ENCODE measurements at regions of chr1 and their contacts with region 1.

Region 1: DNA sequence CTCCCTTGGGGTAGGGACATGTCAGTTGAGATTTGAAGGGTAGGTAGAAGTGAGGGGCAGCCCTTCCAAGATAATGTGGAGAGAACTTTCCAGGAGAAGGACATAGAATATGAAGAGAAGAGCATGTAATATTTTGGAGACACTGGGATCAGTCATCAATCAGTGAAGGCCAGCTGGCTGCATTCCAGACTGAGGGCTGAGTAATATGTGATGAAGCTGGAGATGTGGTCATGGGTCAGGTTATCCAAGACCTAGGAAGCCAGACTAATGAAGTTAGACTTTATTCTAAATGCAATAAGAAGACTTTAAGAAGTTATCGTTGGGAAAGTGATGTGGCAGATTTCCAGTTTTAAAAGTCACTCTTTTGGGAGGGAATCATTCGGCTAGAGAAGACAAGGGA is 262.0 kb downstream of the HMCN1 start:
- DNase-seq: no peak
- ATAC-seq: no peak
- H3K4me3 ChIP-seq: no peak overlapping the region
- H3K27ac ChIP-seq: no peak overlapping the region
- H3K4me1 ChIP-seq: no peaks in the 10 kb centered on the region
- H3K27me3 ChIP-seq: no peaks in the 10 kb centered on the region
- CTCF ChIP-seq: no peak
- EP300 ChIP-seq: no peak
- POLR2A ChIP-seq: no peak
- RAD21 ChIP-seq: no peak

Region 2: GRCh38 chr1:185720633-185721272 is 275.5 kb before region 1 on chr1:
- CTCF ChIA-PET with region 1: no interaction called
- POLR2A ChIA-PET with region 1: no interaction called
- in situ Hi-C with region 1: no loop called
- intact Hi-C with region 1: loop called (anchors 10 kb)
- DNase-seq: peak in 1 of 4 experiments; percentile 33
- ATAC-seq: no peak
- H3K4me3 ChIP-seq: no peak overlapping the region
- H3K27ac ChIP-seq: no peak overlapping the region
- H3K4me1 ChIP-seq: no peaks in the 10 kb centered on the region
- H3K27me3 ChIP-seq: no peaks in the 10 kb centered on the region
- CTCF ChIP-seq: peak in 2 of 3 experiments; percentile 24 to 56; a peak in 4 of 6 replicates
- EP300 ChIP-seq: no peak
- POLR2A ChIP-seq: no peak
- RAD21 ChIP-seq: peak; percentile 68 to 71

Region 3: GRCh38 chr1:185813401-185813979 is 182.7 kb before region 1 on chr1:
- CTCF ChIA-PET with region 1: no interaction called
- POLR2A ChIA-PET with region 1: no interaction called
- in situ Hi-C with region 1: no loop called
- intact Hi-C with region 1: loop called (anchors 5 kb)
- DNase-seq: peak; percentile 13 to 69 (median 18)
- ATAC-seq: peak; percentile 91
- H3K4me3 ChIP-seq: no peak overlapping the region
- H3K27ac ChIP-seq: no peak overlapping the region
- H3K4me1 ChIP-seq: no peaks in the 10 kb centered on the region
- H3K27me3 ChIP-seq: no peaks in the 10 kb centered on the region
- CTCF ChIP-seq: peak; percentile 44 to 75 (median 44); a peak in 4 of 6 replicates
- EP300 ChIP-seq: no peak
- POLR2A ChIP-seq: no peak
- RAD21 ChIP-seq: peak; percentile 69 to 84

Region 4: DNA sequence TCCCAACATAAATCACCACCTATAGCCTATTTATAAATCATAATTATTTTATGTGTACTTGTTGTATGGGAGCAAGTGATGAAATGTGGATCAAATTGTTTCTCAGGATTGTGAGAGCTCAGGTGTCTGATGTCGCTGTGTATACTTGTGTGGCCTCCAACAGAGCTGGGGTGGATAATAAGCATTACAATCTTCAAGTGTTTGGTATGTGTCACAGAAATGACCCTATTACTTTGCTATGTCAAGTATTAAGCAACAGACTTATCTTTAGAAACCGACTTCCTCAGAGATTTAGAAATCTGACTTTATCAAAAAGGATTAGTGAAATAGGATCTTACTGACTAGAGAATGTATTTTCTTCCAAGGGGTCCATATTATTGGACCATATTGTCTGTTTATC is 98.0 kb after region 1 on chr1:
- CTCF ChIA-PET with region 1: no interaction called
- POLR2A ChIA-PET with region 1: no interaction called
- in situ Hi-C with region 1: no loop called
- intact Hi-C with region 1: no loop called
- DNase-seq: no peak
- ATAC-seq: no peak
- H3K4me3 ChIP-seq: no peak overlapping the region
- H3K27ac ChIP-seq: no peak overlapping the region
- H3K4me1 ChIP-seq: no peaks in the 10 kb centered on the region
- H3K27me3 ChIP-seq: no peaks in the 10 kb centered on the region
- CTCF ChIP-seq: no peak
- EP300 ChIP-seq: no peak
- POLR2A ChIP-seq: no peak
- RAD21 ChIP-seq: no peak

Measured in K562 (cell line).